ENCODE measurements at regions of chr14 and their contacts with region 1.

Region 1: DNA sequence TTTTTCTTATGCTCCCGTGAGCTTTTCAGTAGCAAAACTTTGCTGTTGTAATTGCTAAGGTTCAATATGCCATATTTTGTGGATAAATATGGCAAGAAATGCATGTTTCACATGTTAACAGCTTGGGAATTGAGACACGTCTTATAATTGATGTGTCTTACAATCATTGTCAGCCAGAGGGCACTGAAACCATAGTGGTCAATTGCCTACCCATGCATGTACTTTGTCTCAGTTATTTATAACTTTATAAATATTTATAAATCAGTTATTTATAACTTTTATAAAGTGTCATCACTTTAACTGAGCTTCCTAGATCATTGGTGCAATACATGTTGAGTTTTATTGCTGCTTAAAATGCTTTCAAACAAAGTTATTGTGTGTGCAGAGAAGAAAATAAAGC is 82.0 kb downstream of the CATSPERB start:
- DNase-seq: no peak
- ATAC-seq: no peak
- H3K4me3 ChIP-seq: no peak overlapping the region
- H3K27ac ChIP-seq: no peak overlapping the region
- H3K4me1 ChIP-seq: no peaks in the 10 kb centered on the region
- H3K27me3 ChIP-seq: no peaks in the 10 kb centered on the region

Region 2: DNA sequence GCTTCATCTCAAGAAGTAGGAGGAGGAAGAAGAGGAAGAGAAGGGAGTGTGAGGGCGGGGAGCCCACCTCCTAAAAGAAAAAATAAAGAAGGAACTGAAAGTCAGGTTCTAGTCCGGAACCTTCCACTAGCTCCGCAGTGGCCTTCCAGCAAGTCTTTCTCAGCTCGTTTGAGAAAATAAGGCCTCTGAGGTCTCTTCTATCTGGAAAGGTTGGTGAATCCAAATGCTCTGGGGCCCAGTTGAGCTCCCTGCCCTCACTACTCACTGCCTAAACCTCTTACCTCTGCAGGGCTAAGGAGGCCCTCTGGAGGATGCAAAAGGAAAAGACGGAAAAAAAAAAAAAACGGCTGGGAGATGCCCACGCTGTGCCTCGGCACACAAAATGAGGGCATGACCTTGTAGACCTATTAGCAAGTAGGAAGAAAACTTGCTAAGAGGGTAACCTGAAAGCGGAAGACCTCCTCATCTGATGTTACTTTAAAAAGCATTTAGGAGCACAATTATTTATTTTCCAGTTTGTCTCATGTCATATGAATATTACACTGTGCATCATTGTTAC is 261.6 kb after region 1 on chr14:
- intact Hi-C with region 1: loop called in 1 of 2 experiments (anchors 5 kb)
- DNase-seq: no peak
- ATAC-seq: peak; percentile 52
- H3K4me3 ChIP-seq: no peak overlapping the region
- H3K27ac ChIP-seq: peak overlapping the region; percentile 21 to 43
- H3K4me1 ChIP-seq: peaks cover 3% of the 10 kb centered on the region in 2 donors
- H3K27me3 ChIP-seq: no peaks in the 10 kb centered on the region

Region 3: GRCh38 chr14:91996948-91997371 is 347.0 kb after region 1 on chr14:
- intact Hi-C with region 1: loop called (anchors 10 kb)
- DNase-seq: no peak
- ATAC-seq: peak; percentile 79
- H3K4me3 ChIP-seq: no peak overlapping the region
- H3K27ac ChIP-seq: no peak overlapping the region
- H3K4me1 ChIP-seq: no peaks in the 10 kb centered on the region
- H3K27me3 ChIP-seq: no peaks in the 10 kb centered on the region

Measured in aorta (tissue), 5 donors.